Right ventricle myocardium inferior (tissue), 1 donor: ENCODE measurements at regions of chr9 and their contacts with region 1.

Region 1: DNA sequence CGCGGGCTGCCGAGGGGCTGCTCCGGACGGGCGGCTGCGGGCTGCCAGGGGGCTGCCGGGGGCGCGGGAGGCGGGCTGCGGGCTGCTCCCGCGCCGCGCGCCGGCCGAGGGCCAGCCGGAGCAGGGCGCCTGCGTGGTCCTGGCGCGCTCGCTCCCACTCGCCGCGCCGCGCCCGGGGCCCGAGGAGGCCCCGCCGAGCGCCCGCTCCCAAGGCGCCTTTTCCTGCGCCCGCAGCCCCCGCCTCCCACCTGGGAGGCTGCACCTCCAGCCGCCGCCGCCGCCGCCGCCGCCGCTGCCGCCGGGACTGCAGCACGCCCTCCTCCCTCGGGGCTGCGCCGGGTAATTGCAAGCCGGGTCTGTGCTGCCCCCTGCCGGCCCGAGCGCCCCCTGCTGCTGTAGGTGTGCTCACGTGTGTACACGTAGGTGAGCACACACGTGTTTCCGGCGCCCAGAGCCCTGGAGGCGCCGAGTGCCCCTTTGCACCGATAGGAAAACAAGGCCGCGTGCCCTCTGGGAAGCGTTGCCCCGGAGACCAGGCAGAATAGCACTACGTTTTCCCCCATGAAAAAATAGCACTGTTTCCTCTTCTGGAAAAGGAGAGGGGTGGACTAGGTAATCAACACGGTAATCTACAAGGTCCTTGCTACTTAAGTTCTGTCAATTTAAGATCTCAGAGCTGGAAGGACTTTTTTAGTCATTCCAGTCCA is at the start of gene EPB41L4B:
- DNase-seq: peak; percentile 90
- ATAC-seq: peak; percentile 83
- total RNA-seq, gene EPB41L4B: 8.1 TPM

Region 2: DNA sequence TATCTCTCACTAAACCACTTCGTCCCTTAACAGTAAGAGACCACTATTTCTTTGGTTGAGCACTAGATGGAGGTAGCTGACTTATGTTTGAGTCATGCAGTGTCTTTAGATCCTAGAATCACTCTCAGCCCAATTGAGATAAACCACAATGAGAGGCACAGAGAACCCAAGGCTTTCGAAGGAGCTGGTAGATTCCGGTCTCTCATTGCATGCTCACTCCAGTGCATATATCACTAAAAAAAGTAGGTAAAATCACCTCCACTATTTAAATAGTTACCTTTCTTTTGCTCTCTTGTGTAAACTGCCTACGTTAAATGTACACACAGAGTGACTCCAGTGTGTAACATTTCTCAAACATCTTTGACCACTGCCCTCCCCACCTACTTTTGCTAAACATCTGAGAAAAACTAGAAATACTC is 431.2 kb before region 1 on chr9:
- intact Hi-C with region 1: loop called (anchors 5 kb)
- DNase-seq: no peak
- ATAC-seq: peak; percentile 55

Region 3: GRCh38 chr9:109182940-109183798 is 137.7 kb before region 1 on chr9:
- intact Hi-C with region 1: loop called (anchors 5 kb)
- DNase-seq: no peak
- ATAC-seq: no peak

Region 4: DNA sequence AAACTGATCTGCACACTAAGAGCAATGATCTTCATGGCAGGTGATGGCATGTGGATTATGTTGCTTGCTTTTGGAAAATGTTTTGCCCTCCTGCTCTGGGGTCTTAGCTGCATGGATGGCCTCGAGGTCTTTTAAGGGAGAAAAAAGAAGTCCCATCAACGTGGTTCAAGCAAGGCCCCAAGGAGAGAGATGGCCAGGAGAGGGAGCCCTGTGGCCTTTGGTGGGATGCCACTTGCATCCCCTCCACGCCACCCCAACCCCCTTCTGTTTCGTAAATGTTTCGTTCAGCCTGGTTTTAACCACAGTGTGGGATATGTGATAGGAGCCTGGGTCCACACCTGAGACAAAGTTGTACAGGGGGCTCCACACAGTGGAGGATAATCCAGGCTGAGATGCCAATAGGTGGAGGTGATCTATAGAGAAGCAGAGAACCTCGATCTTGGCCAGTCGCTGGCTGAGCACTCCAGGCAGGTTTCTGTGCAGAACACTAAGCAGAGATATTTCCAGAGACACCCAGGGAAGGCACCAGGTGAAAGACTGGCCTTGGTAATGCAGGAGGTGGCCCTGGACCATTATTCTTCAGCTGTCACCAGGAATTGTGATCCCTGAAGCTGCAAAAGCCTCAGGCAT is 128.0 kb before region 1 on chr9:
- intact Hi-C with region 1: loop called (anchors 5 kb)
- DNase-seq: no peak
- ATAC-seq: no peak

Region 5: GRCh38 chr9:109244157-109245132 is 76.5 kb before region 1 on chr9:
- intact Hi-C with region 1: loop called (anchors 1 kb)
- DNase-seq: peak; percentile 79
- ATAC-seq: peak; percentile 81